Right ventricle myocardium inferior (tissue), 1 donor: ENCODE measurements at regions of chr2 and their contacts with region 1.

Region 1: DNA sequence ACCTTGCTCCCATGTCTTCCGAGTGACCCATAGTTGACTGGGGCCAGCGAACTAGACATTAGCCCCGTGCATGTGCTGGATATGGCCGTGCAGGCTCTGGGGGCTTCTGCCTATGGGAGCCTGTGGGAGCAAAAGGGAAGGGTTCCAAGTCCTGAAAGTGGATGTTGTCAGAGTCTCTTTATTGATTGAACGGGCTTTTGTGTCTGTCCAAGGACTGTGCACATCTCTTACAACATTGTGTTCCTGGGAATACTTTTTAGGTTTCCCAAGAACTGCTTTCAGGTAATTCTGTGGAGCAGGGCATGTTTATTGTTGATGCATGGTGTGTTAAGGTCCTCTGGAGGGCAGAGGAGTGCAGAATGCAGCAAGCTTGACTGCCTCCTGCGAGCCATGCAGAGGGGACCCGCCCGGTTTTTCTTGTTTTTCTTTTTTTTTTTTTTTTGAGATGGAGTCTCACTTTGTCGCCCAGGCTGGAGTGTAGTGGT is 5.0 kb downstream of the RNF144A start:
- DNase-seq: no peak
- ATAC-seq: no peak

Region 2: GRCh38 chr2:6877402-6878304 is 44.6 kb before region 1 on chr2 and contains the start of gene RSAD2:
- intact Hi-C with region 1: no loop called
- DNase-seq: no peak
- ATAC-seq: peak; percentile 60
- total RNA-seq, gene RSAD2: 3.3 TPM

Region 3: GRCh38 chr2:6968319-6969100 is 46.3 kb after region 1 on chr2:
- intact Hi-C with region 1: loop called (anchors 5 kb)
- DNase-seq: no peak
- ATAC-seq: peak; percentile 80